ENCODE measurements at regions of chr15 and their contacts with region 1.

Region 1: GRCh38 chr15:74010929-74011540 is 16.5 kb downstream of the PML start:
- DNase-seq: no peak
- ATAC-seq: no peak
- H3K4me3 ChIP-seq: no peak overlapping the region
- H3K27ac ChIP-seq: no peak overlapping the region
- H3K4me1 ChIP-seq: peaks cover 6% of the 10 kb centered on the region; the same call in 1 of the 2 replicates
- H3K27me3 ChIP-seq: no peaks in the 10 kb centered on the region
- CTCF ChIP-seq: no peak

Region 2: GRCh38 chr15:73564256-73564666 is 446.8 kb before region 1 on chr15:
- CTCF ChIA-PET with region 1: no interaction called
- POLR2A ChIA-PET with region 1: no interaction called
- in situ Hi-C with region 1: no loop called
- intact Hi-C with region 1: no loop called
- DNase-seq: no peak
- ATAC-seq: no peak
- H3K4me3 ChIP-seq: no peak overlapping the region
- H3K27ac ChIP-seq: no peak overlapping the region
- H3K4me1 ChIP-seq: no peaks in the 10 kb centered on the region
- H3K27me3 ChIP-seq: no peaks in the 10 kb centered on the region
- CTCF ChIP-seq: no peak

Region 3: GRCh38 chr15:73944161-73945129 is 66.6 kb before region 1 on chr15:
- CTCF ChIA-PET with region 1: interaction called, 13 read pairs
- POLR2A ChIA-PET with region 1: no interaction called
- in situ Hi-C with region 1: no loop called
- intact Hi-C with region 1: no loop called
- DNase-seq: no peak
- ATAC-seq: no peak
- H3K4me3 ChIP-seq: no peak overlapping the region
- H3K27ac ChIP-seq: no peak overlapping the region
- H3K4me1 ChIP-seq: no peaks in the 10 kb centered on the region
- H3K27me3 ChIP-seq: no peaks in the 10 kb centered on the region
- CTCF ChIP-seq: no peak

Region 4: DNA sequence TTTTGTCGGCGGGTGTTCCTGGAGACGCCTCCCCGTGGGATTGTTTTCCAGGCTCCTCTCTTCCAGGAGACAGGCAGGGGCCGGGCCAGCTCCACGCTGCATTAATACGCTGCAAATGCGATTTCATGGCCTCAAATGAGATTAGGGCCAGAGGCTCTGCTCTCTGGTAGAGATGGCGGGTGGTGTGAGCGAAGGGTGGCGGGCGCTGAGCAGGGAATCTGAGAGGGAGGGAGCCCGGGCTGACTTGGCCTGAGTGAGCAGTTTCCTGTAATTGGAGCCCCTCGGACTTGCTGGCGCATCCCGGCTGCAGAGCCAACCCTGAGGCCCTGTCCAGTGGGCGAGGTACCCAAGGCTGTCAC is 217.7 kb after region 1 on chr15:
- CTCF ChIA-PET with region 1: no interaction called
- POLR2A ChIA-PET with region 1: no interaction called
- in situ Hi-C with region 1: no loop called
- intact Hi-C with region 1: no loop called
- DNase-seq: no peak
- ATAC-seq: no peak
- H3K4me3 ChIP-seq: no peak overlapping the region
- H3K27ac ChIP-seq: no peak overlapping the region
- H3K4me1 ChIP-seq: no peaks in the 10 kb centered on the region
- H3K27me3 ChIP-seq: no peaks in the 10 kb centered on the region
- CTCF ChIP-seq: no peak

Measured in Panc1 (cell line).